H1 (cell line): ENCODE measurements at regions of chr7 and their contacts with region 1.

Region 1: DNA sequence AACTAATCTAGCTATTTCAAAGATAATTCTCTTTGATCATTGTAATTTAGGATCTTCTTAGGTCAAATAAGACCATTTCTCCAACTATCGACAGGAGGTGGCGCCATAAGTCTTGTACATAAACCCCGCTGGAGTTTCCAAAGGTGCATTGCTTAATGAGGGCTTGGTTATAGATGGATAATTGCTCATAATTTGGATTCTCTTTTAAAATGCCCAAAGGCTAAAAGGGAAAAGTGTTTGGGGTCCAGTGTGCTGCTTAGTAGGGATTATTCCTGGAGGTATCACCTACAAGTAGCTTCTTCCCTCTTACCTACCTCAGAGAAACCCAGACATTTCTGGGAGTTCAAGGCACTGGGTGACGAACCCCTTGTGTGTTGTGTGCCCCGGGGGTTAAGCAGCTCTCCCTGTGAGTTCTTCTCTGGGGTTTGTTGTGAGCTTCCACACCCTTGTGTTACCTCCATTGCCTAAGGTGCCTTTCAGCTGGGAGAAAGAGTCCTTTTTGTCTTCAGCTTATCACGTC is 75.2 kb downstream of the PAXIP1 start:
- DNase-seq: peak in 1 of 2 experiments; percentile 69
- H3K4me3 ChIP-seq: no peak overlapping the region
- H3K27ac ChIP-seq: no peak overlapping the region
- H3K4me1 ChIP-seq: peaks cover 0 to 6% (median 4%) of the 10 kb centered on the region in 4 experiments; a peak in 5 of 7 replicates
- H3K27me3 ChIP-seq: no peaks in the 10 kb centered on the region
- CTCF ChIP-seq: peak in 2 of 3 experiments; percentile 46 to 60; a peak in 3 of 4 replicates
- EP300 ChIP-seq: no peak
- POLR2A ChIP-seq: no peak
- RAD21 ChIP-seq: peak; percentile 81 to 87

Region 2: DNA sequence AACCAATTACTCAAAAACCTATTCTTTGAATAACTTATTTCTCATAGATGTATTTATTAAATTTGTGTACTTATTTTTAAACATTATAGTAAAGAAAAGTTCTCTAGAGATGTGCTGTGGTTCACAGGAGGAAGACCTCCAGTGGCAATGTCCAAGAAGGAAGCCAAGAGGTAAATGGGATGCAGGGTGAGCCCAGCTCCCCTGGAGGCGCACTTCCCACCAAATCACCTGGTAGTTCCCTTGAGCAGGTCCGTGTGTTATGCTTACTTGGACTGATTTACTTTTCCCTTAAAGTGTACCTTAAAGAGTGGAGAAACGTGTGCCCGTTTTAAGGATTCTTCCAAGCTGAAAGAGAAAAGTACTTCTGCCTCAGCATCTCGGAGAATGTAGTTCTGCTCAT is 19.9 kb after region 1 on chr7:
- CTCF ChIA-PET with region 1: interaction called, 40 read pairs
- POLR2A ChIA-PET with region 1: interaction called, 4 read pairs
- DNase-seq: no peak
- H3K4me3 ChIP-seq: no peak overlapping the region
- H3K27ac ChIP-seq: no peak overlapping the region
- H3K4me1 ChIP-seq: no peaks in the 10 kb centered on the region
- H3K27me3 ChIP-seq: no peaks in the 10 kb centered on the region
- CTCF ChIP-seq: peak; percentile 18 to 64 (median 45); a peak in 3 of 4 replicates
- EP300 ChIP-seq: no peak
- POLR2A ChIP-seq: no peak
- RAD21 ChIP-seq: peak in 1 of 2 experiments; percentile 9; a peak in 1 of 4 replicates

Region 3: DNA sequence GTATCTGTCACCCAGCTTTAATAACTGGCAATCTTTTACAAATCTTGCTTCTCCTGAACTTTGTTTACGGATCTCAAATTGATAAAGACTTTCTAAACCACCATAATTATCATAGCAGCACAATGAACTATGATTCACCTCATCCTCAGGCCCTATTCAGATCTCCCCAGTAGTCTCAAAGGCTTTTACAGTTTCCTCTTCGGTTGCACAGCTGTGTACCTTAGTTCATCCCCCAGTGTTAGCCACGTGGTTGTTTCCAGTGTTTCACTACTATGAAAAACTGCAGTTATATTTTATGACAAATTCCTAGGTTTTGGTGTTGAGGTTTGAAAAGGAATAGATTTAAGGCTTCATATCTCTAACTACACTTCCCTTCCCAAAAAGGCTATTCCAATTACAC is 50.3 kb after region 1 on chr7:
- CTCF ChIA-PET with region 1: interaction called, 10 read pairs
- POLR2A ChIA-PET with region 1: no interaction called
- DNase-seq: no peak
- H3K4me3 ChIP-seq: no peak overlapping the region
- H3K27ac ChIP-seq: no peak overlapping the region
- H3K4me1 ChIP-seq: no peaks in the 10 kb centered on the region
- H3K27me3 ChIP-seq: no peaks in the 10 kb centered on the region
- CTCF ChIP-seq: no peak
- EP300 ChIP-seq: no peak
- POLR2A ChIP-seq: no peak
- RAD21 ChIP-seq: no peak

Region 4: DNA sequence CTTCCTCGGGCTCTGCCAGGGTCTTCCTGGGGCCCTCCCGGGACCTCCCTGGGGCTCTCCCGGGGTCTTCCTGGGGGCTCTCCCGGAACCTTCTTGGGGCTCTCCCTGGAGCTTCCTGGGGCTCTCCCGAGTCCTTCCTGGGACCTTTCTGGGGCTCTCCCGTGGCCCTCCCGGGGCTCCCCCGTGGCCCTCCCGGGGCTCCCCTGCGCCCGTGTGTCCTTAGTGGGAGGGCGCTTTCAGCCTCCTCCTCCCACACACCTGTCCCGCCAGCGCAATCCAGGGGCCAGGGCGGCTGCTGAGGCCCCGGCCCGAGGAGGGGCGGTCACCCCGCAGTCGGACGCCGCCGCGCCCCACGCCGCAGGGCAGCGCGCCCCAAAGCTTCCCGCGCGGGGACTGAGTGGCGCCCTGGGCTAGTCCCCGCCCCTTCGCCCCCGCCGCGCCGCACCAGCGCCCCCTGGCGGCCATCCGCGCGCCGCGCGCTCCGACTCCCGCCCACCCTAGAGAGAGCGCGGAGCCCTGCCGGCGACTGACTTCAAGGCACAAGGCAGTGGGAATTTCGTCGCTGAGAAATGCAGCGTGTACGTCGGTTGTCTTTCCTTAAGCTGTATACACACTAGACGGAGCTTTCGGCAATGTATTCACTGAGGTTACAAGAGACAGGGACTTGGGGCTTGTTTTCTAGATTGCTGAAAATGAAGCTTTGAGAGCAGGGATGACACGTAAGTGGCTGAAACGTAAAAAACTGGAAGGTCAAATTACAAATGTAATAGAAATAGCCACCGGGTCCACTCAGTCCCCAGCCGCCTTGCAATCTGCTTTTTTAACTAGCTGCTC is 417.1 kb after region 1 on chr7:
- CTCF ChIA-PET with region 1: interaction called, 15 read pairs
- POLR2A ChIA-PET with region 1: no interaction called
- DNase-seq: peak; percentile 19 to 91
- H3K4me3 ChIP-seq: peak overlapping the region; percentile 22 to 66 (median 34)
- H3K27ac ChIP-seq: no peak overlapping the region
- H3K4me1 ChIP-seq: peaks cover 0 to 8% (median 2%) of the 10 kb centered on the region in 4 experiments; a peak in 3 of 7 replicates
- H3K27me3 ChIP-seq: peaks cover 4 to 12% (median 6%) of the 10 kb centered on the region in 4 experiments; a peak in 6 of 7 replicates
- CTCF ChIP-seq: peak; percentile 80 to 96 (median 89)
- EP300 ChIP-seq: no peak
- POLR2A ChIP-seq: no peak
- RAD21 ChIP-seq: peak; percentile 68 to 89